ENCODE measurements at regions of chr18 and their contacts with region 1.

Region 1: DNA sequence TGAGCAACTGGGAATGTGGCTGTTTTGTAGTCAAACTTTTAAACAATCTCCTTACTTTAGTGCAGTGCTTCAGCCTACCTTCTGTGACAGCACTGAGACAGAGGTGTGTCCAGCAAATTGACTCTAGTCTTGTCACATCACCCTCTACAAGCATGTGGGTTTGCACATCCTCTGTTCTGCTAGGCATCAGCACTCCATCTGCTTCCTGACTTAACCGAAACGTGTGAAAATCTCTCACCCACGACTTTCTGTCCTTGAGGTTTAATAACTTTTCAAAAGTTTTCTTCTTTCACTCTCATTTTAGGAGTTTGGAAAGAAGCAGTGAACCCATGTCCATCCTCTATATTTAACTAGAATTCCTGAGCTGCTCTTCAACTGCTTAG is 42.6 kb downstream of the TTR start:
- DNase-seq: no peak
- H3K4me3 Mint-ChIP-seq: no peak overlapping the region
- H3K27ac Mint-ChIP-seq: no peak overlapping the region
- H3K4me1 Mint-ChIP-seq: peaks cover 23% of the 10 kb centered on the region
- H3K27me3 Mint-ChIP-seq: peaks cover 8% of the 10 kb centered on the region

Region 2: GRCh38 chr18:31722369-31722957 is 88.1 kb after region 1 on chr18:
- intact Hi-C with region 1: loop called (anchors 5 kb)
- DNase-seq: peak; percentile 63
- H3K4me3 Mint-ChIP-seq: no peak overlapping the region
- H3K27ac Mint-ChIP-seq: no peak overlapping the region
- H3K4me1 Mint-ChIP-seq: peaks cover 4% of the 10 kb centered on the region
- H3K27me3 Mint-ChIP-seq: peaks cover 30% of the 10 kb centered on the region

Region 3: DNA sequence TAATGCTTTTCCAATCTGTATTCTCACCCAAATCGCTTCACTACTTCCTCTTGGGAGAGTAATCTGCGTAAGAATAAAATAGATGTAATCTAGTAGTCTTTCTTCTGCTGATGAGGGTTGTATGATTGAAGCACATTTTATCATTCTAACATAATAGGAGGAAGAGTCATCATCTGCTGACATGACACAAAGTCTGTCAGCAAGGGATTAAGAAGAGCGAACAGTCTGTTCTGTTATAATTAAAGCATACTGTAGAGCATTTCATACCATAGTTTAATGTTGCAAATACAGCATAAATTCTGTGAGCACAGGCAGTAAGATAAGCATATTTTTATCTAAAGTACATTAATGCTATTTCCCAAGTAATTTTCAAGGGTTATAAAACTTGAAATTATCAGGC is 116.0 kb after region 1 on chr18:
- intact Hi-C with region 1: no loop called
- DNase-seq: no peak
- H3K4me3 Mint-ChIP-seq: no peak overlapping the region
- H3K27ac Mint-ChIP-seq: no peak overlapping the region
- H3K4me1 Mint-ChIP-seq: no peaks in the 10 kb centered on the region
- H3K27me3 Mint-ChIP-seq: peaks cover 18% of the 10 kb centered on the region

Measured in activated T-helper 2 cell treated with anti-CD3 and anti-CD28 coated beads, Interferon-gamma antibody, Interleukin-2, Interleukin-4, amounts not matched to agents 10 μg/mL and 5 μg/mL and 100 μg/mL, durations not matched to agents 14 hours and 24 hours and 36 hours (primary cell).